ENCODE measurements at regions of chr9 and their contacts with region 1.

Region 1: GRCh38 chr9:124940693-124941453 is at the start of gene GOLGA1:
- DNase-seq: peak; percentile 96
- ATAC-seq: peak; percentile 89
- H3K4me3 Mint-ChIP-seq: peak within 1 kb of the TSS; percentile 93
- H3K27ac Mint-ChIP-seq: peak within 1 kb of the TSS; percentile 99
- H3K4me1 Mint-ChIP-seq: peaks cover 20% of the 10 kb centered on the region
- H3K27me3 Mint-ChIP-seq: no peaks in the 10 kb centered on the region
- total RNA-seq, gene GOLGA1: 17.4 to 18.3 TPM

Region 2: DNA sequence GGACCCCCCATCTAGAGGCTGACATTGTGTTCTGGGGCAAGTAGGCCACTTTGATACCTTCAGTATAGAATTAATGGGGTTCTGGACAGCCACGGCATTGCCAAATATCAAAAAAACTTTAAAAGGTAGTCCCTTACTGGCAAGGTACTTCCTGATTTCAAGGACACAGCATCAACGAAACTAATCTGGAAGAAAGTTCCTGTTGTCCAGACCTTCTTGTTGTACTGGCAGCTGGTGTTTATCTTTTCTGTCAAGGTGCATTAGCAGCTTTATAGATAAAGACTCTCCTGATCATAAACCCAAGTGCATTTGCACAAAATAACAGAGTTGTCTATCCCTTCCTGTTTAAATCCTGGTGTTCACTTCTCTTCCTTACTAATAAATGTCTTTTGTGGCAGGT is 23.7 kb after region 1 on chr9:
- CTCF ChIA-PET with region 1: no interaction called
- POLR2A ChIA-PET with region 1: no interaction called
- intact Hi-C with region 1: loop called in 1 of 2 experiments (anchors 2 kb)
- DNase-seq: no peak
- ATAC-seq: no peak
- H3K4me3 Mint-ChIP-seq: no peak overlapping the region
- H3K27ac Mint-ChIP-seq: peak overlapping the region; percentile 96
- H3K4me1 Mint-ChIP-seq: peaks cover 26% of the 10 kb centered on the region
- H3K27me3 Mint-ChIP-seq: no peaks in the 10 kb centered on the region

Region 3: DNA sequence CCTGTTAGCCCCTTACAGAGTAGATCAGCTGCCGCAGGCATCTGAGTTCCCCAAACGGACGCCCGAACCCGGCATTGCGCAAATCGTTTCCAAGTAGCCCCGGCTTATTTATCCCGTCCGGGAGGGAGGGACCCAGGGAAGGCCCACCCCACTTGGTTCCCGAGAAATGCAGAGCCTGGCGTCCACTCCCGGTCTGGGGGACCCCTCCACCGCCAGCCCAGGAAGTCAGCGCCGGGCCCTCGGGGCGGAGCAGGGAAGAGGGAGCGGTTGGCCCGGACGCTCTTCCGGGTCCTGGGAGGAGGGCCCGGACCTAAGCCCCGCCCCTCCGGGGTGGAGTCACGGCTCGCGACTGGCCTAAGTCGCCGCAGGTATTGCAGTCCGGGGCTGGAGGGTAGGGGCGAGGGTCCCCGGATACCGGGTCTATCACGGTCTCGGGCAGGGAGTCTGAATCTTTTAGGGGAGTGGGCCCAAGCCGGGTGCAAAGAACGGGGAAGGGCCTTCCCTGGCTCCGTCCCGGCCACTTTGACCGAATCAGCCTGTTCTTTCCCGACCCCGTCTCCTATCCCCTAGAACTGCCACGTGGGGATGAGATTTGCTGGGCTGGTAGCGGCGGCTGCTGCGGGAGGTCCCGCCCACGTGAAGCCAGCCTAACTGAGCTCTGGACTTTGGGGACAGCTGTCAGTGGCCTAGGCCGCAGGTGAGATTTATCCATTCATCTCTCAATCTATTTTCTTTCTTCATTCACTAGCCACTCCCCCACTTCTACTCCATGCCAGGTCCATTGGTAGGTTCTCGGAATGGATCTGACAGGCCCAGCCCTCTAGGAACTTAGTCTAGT is 259.6 kb after region 1 on chr9 and contains the start of gene RABEPK:
- CTCF ChIA-PET with region 1: no interaction called
- POLR2A ChIA-PET with region 1: no interaction called
- intact Hi-C with region 1: loop called in 1 of 2 experiments (anchors 1 kb)
- DNase-seq: peak; percentile 95
- ATAC-seq: peak; percentile 98
- H3K4me3 Mint-ChIP-seq: peak within 1 kb of the TSS; percentile 83
- H3K27ac Mint-ChIP-seq: peak within 1 kb of the TSS; percentile 80
- H3K4me1 Mint-ChIP-seq: peaks cover 30% of the 10 kb centered on the region
- H3K27me3 Mint-ChIP-seq: no peaks in the 10 kb centered on the region
- total RNA-seq, gene RABEPK: 29.1 to 33.1 TPM